CD4-positive, alpha-beta T cell (primary cell): ENCODE measurements at regions of chr5 and their contacts with region 1.

Region 1: DNA sequence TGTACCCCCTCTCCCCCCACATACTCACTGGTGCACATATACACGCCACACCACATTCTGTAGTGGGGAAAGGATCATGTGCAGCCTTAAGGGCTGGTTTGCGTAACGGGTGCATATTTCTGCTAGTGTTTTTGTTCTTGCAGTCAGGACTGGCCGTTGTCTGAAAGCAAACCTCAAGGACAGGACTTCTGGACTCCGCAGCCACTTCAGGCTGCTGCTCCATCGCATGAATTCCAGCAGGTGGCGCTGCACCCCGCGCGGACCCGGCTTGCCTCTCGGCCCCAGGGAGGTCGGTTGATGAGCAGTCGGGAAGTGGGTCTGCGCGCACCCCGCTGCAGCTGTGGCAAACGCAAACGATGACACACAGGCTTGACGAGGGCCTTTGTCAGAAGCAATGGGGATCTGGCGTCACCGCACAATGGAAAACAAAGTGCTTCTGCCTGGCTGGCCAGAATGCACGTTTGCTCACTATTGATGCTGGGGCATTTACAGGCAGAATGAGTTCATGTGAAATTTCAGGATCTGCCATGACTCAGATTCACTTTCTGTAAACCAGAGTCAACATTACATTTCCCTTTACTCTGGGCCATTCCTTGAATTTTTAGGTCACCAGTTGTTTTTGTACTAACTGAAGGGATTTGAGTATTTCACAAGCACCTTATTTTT is 36.3 kb upstream of the GLRX start:
- DNase-seq: peak; percentile 82 to 94 (median 89)
- ATAC-seq: peak; percentile 96
- H3K4me3 ChIP-seq: no peak overlapping the region
- H3K4me3 Mint-ChIP-seq: no peak overlapping the region
- H3K27ac ChIP-seq: no peak overlapping the region
- H3K27ac Mint-ChIP-seq: peak overlapping the region; percentile 14
- H3K4me1 ChIP-seq: peaks cover 16% of the 10 kb centered on the region
- H3K4me1 Mint-ChIP-seq: peaks cover 42% of the 10 kb centered on the region
- H3K27me3 ChIP-seq: no peaks in the 10 kb centered on the region
- H3K27me3 Mint-ChIP-seq: peaks cover 13% of the 10 kb centered on the region
- CTCF ChIP-seq: peak; percentile 98

Region 2: GRCh38 chr5:95870105-95870672 is 11.4 kb after region 1 on chr5:
- CTCF ChIA-PET with region 1: interaction called, 15 read pairs
- POLR2A ChIA-PET with region 1: interaction called, 6 read pairs
- intact Hi-C with region 1: no loop called
- DNase-seq: peak in 3 of 14 experiments; percentile 31 to 42 (median 37)
- ATAC-seq: peak; percentile 15
- H3K4me3 ChIP-seq: no peak overlapping the region
- H3K4me3 Mint-ChIP-seq: peak overlapping the region; percentile 1
- H3K27ac ChIP-seq: no peak overlapping the region
- H3K27ac Mint-ChIP-seq: no peak overlapping the region
- H3K4me1 ChIP-seq: peaks cover 26% of the 10 kb centered on the region
- H3K4me1 Mint-ChIP-seq: peaks cover 41% of the 10 kb centered on the region
- H3K27me3 ChIP-seq: no peaks in the 10 kb centered on the region
- H3K27me3 Mint-ChIP-seq: no peaks in the 10 kb centered on the region
- CTCF ChIP-seq: no peak

Region 3: GRCh38 chr5:95900383-95900958 is 41.7 kb after region 1 on chr5:
- CTCF ChIA-PET with region 1: interaction called, 3 read pairs
- POLR2A ChIA-PET with region 1: no interaction called
- intact Hi-C with region 1: loop called in 1 of 2 experiments (anchors 5 kb)
- DNase-seq: no peak
- ATAC-seq: no peak
- H3K4me3 ChIP-seq: no peak overlapping the region
- H3K4me3 Mint-ChIP-seq: no peak overlapping the region
- H3K27ac ChIP-seq: no peak overlapping the region
- H3K27ac Mint-ChIP-seq: no peak overlapping the region
- H3K4me1 ChIP-seq: no peaks in the 10 kb centered on the region
- H3K4me1 Mint-ChIP-seq: no peaks in the 10 kb centered on the region
- H3K27me3 ChIP-seq: no peaks in the 10 kb centered on the region
- H3K27me3 Mint-ChIP-seq: no peaks in the 10 kb centered on the region
- CTCF ChIP-seq: no peak

Region 4: DNA sequence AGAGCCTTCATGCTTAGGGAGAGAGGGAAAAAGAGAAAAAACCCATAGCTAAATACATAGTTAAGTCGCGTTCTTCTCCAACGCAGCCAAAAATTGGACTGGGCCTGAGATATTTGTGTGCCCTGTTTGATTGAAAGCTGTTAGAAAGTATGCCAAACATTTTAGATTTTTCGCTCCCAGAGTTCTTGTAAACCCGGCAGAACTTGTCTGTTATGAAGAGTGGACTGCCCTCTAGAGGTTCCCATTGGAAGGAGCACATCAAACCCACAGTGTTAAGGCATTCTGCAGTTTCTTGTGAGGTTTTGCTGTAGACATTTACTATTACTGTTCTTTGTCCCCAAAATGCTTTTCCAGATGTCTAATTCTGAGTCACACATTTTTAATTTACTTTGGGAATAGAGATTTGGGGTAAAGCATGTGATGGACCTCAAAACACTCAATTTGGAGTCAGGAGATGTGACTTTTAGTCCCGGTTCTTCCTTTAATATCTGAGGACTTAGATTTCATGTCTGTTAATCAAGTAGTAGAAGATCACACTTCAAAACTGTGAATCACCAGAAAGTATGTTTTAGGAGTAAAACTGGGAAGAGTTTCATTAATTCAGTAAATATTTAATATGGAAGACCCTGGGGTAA is 477.7 kb after region 1 on chr5:
- CTCF ChIA-PET with region 1: interaction called, 21 read pairs
- POLR2A ChIA-PET with region 1: interaction called, 3 read pairs
- intact Hi-C with region 1: loop called (anchors 1 kb)
- DNase-seq: peak in 13 of 14 experiments; percentile 16 to 83 (median 48)
- ATAC-seq: peak; percentile 95
- H3K4me3 ChIP-seq: no peak overlapping the region
- H3K4me3 Mint-ChIP-seq: no peak overlapping the region
- H3K27ac ChIP-seq: no peak overlapping the region
- H3K27ac Mint-ChIP-seq: no peak overlapping the region
- H3K4me1 ChIP-seq: no peaks in the 10 kb centered on the region
- H3K4me1 Mint-ChIP-seq: no peaks in the 10 kb centered on the region
- H3K27me3 ChIP-seq: no peaks in the 10 kb centered on the region
- H3K27me3 Mint-ChIP-seq: peaks cover 19% of the 10 kb centered on the region
- CTCF ChIP-seq: peak; percentile 81

Region 5: GRCh38 chr5:96536991-96537785 is 678.4 kb after region 1 on chr5:
- CTCF ChIA-PET with region 1: no interaction called
- POLR2A ChIA-PET with region 1: no interaction called
- intact Hi-C with region 1: loop called in 1 of 2 experiments (anchors 10 kb)
- DNase-seq: peak in 4 of 14 experiments; percentile 8 to 87 (median 78)
- ATAC-seq: peak; percentile 96
- H3K4me3 ChIP-seq: no peak overlapping the region
- H3K4me3 Mint-ChIP-seq: peak overlapping the region; percentile 31
- H3K27ac ChIP-seq: peak overlapping the region; percentile 39 to 56
- H3K27ac Mint-ChIP-seq: peak overlapping the region; percentile 73
- H3K4me1 ChIP-seq: peaks cover 14% of the 10 kb centered on the region
- H3K4me1 Mint-ChIP-seq: peaks cover 32% of the 10 kb centered on the region
- H3K27me3 ChIP-seq: no peaks in the 10 kb centered on the region
- H3K27me3 Mint-ChIP-seq: no peaks in the 10 kb centered on the region
- CTCF ChIP-seq: no peak

Region 6: DNA sequence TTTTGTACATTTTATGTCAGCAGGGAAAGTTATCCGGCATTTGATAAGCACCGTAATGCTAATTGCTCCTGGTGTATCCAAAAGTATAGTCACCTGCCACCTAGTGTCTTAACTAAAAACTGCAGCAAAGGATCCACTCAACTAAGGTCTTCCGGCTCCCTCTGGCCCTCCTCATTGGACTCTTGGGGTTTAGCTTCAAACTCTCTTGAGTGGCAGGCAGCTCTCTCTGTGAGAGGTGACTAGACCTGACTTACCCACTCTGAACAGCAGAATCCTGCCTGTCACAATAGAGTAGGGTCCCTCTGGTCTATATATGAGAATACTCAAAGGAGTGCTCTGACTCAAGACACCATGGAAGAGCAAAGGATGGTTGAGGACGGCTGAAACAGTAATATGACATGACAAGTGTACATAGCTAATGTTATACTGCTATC is 743.0 kb after region 1 on chr5:
- CTCF ChIA-PET with region 1: interaction called, 5 read pairs
- POLR2A ChIA-PET with region 1: no interaction called
- intact Hi-C with region 1: loop called (anchors 1 to 2 kb)
- DNase-seq: peak in 13 of 14 experiments; percentile 8 to 83 (median 27)
- ATAC-seq: peak; percentile 87
- H3K4me3 ChIP-seq: no peak overlapping the region
- H3K4me3 Mint-ChIP-seq: no peak overlapping the region
- H3K27ac ChIP-seq: no peak overlapping the region
- H3K27ac Mint-ChIP-seq: no peak overlapping the region
- H3K4me1 ChIP-seq: peaks cover 3% of the 10 kb centered on the region
- H3K4me1 Mint-ChIP-seq: no peaks in the 10 kb centered on the region
- H3K27me3 ChIP-seq: peaks cover 0 to 5% of the 10 kb centered on the region in 2 experiments
- H3K27me3 Mint-ChIP-seq: peaks cover 18% of the 10 kb centered on the region
- CTCF ChIP-seq: peak; percentile 81